ENCODE measurements at regions of chr1 and their contacts with region 1.

Region 1: DNA sequence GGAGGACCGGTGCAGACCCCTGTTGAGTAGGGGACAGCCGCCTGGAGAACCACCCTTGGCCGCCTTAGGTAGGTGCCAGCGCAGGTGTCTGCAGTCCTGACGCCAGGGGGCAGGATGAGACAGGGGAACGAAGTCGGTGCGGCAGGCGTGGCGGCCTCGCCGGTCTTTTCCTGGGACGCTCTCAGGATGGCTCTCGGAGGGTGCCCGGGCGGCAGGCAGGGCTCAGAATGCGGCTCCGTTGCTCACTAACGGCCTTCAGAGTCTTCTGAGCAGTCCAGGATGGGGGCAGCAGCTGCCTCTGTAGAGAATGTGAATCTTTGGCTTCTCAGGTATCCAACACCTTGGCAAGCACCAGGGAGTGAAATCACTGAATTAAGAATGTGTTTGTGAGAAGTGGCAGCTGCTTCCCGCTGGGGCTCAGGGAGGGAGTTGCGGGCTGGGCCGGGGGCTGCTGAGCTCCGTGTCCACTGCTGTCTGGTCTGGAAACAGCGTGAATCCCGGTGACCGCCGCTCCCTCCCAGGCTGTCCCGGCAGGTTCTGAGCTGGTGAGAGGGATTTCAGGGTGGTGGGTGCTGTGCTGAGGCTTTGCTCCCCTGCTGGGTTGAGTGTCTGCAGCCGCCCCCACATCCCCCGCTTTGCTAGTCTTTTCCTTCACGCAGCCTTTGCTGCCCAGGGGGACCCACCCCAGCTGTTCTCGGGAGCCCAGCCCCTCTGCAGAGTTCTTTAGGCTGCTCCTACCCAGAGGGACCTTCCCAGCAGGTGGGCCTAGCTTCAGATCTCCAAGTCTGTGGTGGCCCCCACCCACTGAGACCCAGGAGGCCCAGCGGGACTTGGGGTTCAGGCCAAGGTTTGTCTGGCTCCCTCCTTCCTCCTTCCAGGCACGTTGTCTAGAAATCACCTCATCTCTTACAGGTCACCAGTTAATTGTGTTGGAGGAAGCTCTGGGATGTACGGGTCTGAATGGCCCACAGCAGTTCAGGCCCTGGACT is 11.1 kb upstream of the C1orf174 start:
- DNase-seq: peak; percentile 75
- ATAC-seq: peak; percentile 69

Region 2: DNA sequence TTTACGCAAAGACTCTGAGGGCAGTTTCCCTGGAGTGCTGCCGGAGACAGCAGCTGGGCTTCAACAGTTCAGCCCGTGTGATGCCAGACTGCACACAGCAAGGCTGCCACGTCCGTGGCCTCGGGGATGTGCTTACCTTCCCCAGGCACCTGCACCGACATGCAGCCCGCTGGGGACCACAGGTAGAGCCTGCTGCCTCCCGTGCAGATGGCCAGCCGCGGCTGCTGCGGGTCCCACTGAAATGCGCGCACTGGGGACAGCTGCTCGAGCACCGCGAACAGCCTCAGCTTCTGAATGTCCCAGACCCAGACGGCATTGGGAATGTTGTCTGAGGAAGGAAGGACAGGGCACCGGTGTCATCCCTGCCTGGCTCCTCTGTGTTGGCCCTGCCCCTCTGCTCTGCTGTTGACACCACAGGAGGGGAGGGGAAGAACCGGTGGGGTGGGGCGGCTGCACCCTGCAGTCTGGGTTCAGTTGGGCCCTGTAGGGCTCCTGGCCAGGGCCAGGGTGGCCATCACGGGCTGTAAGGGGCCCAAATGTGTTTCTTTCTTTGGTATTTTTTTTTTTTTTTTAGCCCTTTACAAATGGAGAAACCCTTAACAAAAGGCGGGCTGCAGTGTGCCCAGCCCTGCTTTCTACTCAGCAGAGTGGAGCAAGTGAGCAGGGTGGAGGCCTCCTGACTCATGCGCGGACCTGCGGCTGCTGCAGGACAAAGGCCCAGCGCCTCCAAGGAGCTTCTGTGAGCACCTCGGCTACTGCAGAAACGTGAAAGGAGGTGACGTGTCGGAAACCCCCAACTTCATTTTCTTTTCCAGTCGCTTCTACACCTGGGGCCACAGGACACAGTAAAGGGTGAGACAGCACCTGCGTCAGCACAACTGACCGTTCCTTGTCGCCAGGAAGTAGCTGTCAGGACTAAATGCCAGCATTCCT is 279.6 kb before region 1 on chr1:
- intact Hi-C with region 1: no loop called
- DNase-seq: no peak
- ATAC-seq: no peak

Region 3: GRCh38 chr1:4090976-4091660 is 180.0 kb after region 1 on chr1:
- intact Hi-C with region 1: no loop called
- DNase-seq: no peak
- ATAC-seq: no peak

Region 4: DNA sequence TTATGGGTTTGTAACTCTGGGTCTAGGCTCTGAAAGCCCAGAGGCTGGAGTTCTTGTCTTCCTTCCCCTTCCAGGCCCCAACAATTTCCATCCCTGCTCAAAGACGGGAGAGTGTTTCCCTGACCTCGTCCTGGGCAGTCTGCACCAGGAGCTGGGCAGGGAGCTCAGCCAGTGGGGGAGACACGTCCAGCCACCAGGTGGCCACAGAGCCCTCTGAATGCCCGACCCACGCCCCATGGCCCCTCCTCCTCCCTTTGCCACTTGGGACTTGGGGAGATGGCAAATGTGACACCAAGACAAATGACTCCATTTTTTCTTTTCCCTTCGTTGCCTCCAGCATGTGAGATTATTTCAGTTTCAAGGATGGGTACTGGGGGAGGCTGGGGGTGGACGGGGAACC is 583.4 kb after region 1 on chr1:
- intact Hi-C with region 1: loop called (anchors 5 kb)
- DNase-seq: no peak
- ATAC-seq: peak; percentile 50

Region 5: DNA sequence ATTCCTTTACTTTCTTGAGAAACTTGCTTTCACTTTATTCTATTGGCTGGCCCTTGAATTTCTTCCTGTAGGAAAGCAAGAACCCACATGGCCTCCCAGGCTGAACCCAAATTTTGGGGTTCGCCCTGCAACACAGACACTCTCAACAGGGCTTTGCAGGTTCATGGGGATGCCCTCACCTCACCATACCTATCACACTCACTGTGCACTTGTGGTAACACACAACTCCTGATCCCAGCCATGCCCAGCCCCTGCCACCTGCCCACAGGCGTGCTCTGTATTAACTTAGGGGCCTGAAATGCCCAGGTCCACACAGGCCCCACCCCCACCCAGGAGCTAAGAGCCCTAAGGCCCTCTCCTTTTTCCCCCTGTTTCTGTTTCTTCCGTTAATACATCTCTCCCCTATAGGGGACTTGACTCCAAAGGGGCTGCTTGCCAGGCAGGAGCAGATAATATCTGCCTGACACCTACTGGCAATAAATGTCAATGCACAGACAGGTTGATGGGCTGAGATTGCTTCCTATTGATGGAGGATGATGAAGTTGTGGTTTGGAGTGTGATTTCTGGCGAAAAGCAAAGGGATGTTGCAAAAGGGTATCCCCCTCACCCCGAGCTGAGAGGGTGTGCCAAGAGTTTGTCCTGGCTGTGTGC is 914.8 kb after region 1 on chr1:
- intact Hi-C with region 1: loop called (anchors 5 kb)
- DNase-seq: no peak
- ATAC-seq: no peak

Region 6: GRCh38 chr1:5745776-5746610 is 1834.8 kb after region 1 on chr1:
- intact Hi-C with region 1: loop called (anchors 5 kb)
- DNase-seq: no peak
- ATAC-seq: peak; percentile 80

Measured in Right ventricle myocardium inferior (tissue), 1 donor.